ENCODE measurements at regions of chr16 and their contacts with region 1.

Region 1: GRCh38 chr16:30018731-30019158 is 4.3 kb upstream of the C16orf92 start:
- DNase-seq: no peak
- H3K4me3 ChIP-seq: no peak overlapping the region
- H3K27ac ChIP-seq: no peak overlapping the region
- H3K4me1 ChIP-seq: no peaks in the 10 kb centered on the region
- H3K27me3 ChIP-seq: no peaks in the 10 kb centered on the region
- CTCF ChIP-seq: no peak
- POLR2A ChIP-seq: no peak

Region 2: GRCh38 chr16:30005341-30006094 is 13.2 kb before region 1 on chr16:
- CTCF ChIA-PET with region 1: interaction called, 17 read pairs
- POLR2A ChIA-PET with region 1: no interaction called
- dilution Hi-C with region 1: no loop called
- intact Hi-C with region 1: no loop called
- DNase-seq: peak; percentile 11
- H3K4me3 ChIP-seq: no peak overlapping the region
- H3K27ac ChIP-seq: no peak overlapping the region
- H3K4me1 ChIP-seq: no peaks in the 10 kb centered on the region
- H3K27me3 ChIP-seq: peaks cover 9 to 12% of the 10 kb centered on the region in 2 experiments
- CTCF ChIP-seq: peak; percentile 73 to 88
- POLR2A ChIP-seq: no peak

Region 3: DNA sequence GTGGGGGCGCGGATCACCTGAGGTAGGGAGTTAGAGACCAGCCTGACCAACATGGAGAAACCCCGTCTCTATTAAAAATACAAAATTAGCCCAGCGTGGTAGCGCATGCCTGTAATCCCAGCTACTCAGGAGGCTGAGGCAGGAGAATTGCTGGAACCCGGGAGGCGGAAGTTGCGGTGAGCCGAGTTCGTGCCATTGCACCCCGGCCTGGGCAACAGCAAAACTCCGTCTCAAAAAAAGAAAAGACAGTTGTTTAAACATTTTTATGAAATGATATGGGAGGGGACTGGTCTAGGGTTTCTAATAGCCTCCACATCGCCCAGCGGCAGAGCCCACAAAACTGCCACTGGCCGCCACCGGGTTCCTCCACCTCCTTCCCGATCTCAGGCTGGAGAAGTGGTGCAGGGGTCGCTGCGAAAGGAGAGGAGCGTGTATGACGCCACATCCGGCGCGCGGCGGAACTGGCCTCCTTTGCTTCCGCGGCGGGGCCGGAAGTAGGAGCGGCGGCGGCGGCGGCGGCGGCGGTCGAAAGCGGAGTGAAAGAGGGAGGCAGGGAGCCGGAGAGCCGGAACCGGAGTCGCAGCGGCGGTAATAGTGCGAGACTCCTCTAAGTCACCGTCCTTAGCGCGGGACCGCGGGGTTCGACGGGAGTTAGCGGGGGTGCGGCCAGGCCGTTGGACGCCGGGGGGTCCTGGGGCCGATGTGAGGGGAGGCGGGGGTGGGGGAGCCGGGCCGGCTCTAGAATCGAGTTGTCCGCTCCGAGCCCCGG is 56.9 kb after region 1 on chr16 and contains the start of gene PPP4C:
- CTCF ChIA-PET with region 1: no interaction called
- POLR2A ChIA-PET with region 1: no interaction called
- dilution Hi-C with region 1: no loop called
- intact Hi-C with region 1: no loop called
- DNase-seq: peak; percentile 85
- H3K4me3 ChIP-seq: peak within 1 kb of the TSS; percentile 58 to 78 (median 76)
- H3K27ac ChIP-seq: peak within 1 kb of the TSS; percentile 81
- H3K4me1 ChIP-seq: peaks cover 24% of the 10 kb centered on the region
- H3K27me3 ChIP-seq: no peaks in the 10 kb centered on the region
- CTCF ChIP-seq: no peak
- POLR2A ChIP-seq: peak; percentile 97
- total RNA-seq, gene PPP4C: 159 and 167 TPM in 2 replicates

Region 4: DNA sequence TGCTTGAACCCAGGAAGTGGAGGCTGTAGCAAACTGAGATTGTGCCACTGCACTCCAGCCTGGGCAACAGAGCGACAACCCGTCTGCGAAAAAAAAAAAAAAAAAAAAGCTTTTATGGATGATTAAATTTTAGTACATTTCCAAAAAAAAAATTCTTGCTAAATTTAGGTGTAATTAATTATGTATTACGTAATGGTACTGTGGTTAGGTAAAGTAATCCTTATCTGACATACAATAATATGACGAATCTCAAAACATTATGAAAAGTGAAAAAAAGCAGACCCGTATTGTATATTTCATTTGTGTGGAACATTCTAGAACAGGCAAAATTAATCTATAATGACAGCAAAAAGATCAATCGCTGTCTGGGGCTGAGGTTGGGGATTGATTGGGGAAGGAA is 154.3 kb after region 1 on chr16:
- CTCF ChIA-PET with region 1: no interaction called
- POLR2A ChIA-PET with region 1: no interaction called
- dilution Hi-C with region 1: no loop called
- intact Hi-C with region 1: no loop called
- DNase-seq: no peak
- H3K4me3 ChIP-seq: no peak overlapping the region
- H3K27ac ChIP-seq: no peak overlapping the region
- H3K4me1 ChIP-seq: no peaks in the 10 kb centered on the region
- H3K27me3 ChIP-seq: no peaks in the 10 kb centered on the region
- CTCF ChIP-seq: no peak
- POLR2A ChIP-seq: no peak

Measured in endothelial cell of umbilical vein (primary cell).